Sigmoid colon (tissue), 7 donors: ENCODE measurements at regions of chr22 and their contacts with region 1.

Region 1: GRCh38 chr22:37817705-37818408 is 5.3 kb upstream of the GALR3 start:
- DNase-seq: peak; percentile 90
- H3K4me3 ChIP-seq: peak overlapping the region in 3 of 4 donors; percentile 32 to 48 (median 47)
- H3K27ac ChIP-seq: peak overlapping the region in 3 of 4 donors; percentile 41 to 65 (median 55)
- H3K4me1 ChIP-seq: peaks cover 0 to 19% (median 16%) of the 10 kb centered on the region in 4 donors
- H3K27me3 ChIP-seq: peaks cover 0 to 35% (median 17%) of the 10 kb centered on the region in 3 donors
- CTCF ChIP-seq: peak; percentile 93 to 97 (median 96)
- EP300 ChIP-seq: no peak
- POLR2A ChIP-seq: no peak

Region 2: GRCh38 chr22:37672206-37672919 is 145.5 kb before region 1 on chr22:
- intact Hi-C with region 1: no loop called
- DNase-seq: no peak
- H3K4me3 ChIP-seq: no peak overlapping the region
- H3K27ac ChIP-seq: peak overlapping the region; percentile 92 to 99 (median 95)
- H3K4me1 ChIP-seq: peaks cover 0 to 55% (median 42%) of the 10 kb centered on the region in 4 donors
- H3K27me3 ChIP-seq: no peaks in the 10 kb centered on the region
- CTCF ChIP-seq: no peak
- EP300 ChIP-seq: no peak
- POLR2A ChIP-seq: no peak

Region 3: DNA sequence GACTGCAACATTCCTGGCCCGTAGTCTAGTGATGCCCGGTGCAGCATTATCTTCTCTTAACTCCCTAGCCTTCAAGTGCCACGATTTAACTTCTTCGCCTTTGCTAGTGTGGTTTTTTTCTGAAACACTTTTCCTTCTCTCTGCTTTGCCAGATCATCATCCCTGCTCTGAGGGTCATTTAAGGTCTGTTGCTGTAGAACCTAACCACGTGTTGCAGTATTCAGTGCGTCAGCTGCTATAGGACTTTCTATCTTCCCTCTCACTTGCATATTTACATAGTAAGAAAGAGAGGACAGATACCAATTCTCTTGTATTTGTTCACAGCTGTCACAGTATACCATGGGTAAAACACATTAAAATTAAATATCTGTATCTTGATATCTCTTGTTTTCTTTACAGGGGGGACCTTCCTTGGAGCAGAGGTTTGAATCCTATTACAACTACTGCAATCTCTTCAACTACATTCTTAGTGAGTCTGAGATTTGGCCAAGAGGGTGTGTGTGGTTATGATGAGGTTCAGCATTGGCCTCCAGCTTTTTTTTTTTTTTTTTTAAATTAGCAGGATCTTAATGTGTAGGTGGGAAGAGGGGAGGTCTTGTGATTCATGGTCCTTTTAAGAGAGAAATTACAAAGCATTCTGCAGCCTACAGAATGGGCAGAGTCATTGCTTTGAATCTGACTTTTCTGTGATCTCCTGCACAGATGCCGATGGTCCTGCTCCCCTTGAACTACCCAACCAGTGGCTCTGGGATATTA is 44.9 kb after region 1 on chr22:
- intact Hi-C with region 1: loop called (anchors 1 kb)
- DNase-seq: no peak
- H3K4me3 ChIP-seq: no peak overlapping the region
- H3K27ac ChIP-seq: peak overlapping the region in 3 of 4 donors; percentile 46 to 74 (median 65)
- H3K4me1 ChIP-seq: peaks cover 0 to 23% (median 10%) of the 10 kb centered on the region in 4 donors
- H3K27me3 ChIP-seq: no peaks in the 10 kb centered on the region
- CTCF ChIP-seq: no peak
- EP300 ChIP-seq: no peak
- POLR2A ChIP-seq: no peak